Panc1 (cell line): ENCODE measurements at regions of chr18 and their contacts with region 1.

Region 1: DNA sequence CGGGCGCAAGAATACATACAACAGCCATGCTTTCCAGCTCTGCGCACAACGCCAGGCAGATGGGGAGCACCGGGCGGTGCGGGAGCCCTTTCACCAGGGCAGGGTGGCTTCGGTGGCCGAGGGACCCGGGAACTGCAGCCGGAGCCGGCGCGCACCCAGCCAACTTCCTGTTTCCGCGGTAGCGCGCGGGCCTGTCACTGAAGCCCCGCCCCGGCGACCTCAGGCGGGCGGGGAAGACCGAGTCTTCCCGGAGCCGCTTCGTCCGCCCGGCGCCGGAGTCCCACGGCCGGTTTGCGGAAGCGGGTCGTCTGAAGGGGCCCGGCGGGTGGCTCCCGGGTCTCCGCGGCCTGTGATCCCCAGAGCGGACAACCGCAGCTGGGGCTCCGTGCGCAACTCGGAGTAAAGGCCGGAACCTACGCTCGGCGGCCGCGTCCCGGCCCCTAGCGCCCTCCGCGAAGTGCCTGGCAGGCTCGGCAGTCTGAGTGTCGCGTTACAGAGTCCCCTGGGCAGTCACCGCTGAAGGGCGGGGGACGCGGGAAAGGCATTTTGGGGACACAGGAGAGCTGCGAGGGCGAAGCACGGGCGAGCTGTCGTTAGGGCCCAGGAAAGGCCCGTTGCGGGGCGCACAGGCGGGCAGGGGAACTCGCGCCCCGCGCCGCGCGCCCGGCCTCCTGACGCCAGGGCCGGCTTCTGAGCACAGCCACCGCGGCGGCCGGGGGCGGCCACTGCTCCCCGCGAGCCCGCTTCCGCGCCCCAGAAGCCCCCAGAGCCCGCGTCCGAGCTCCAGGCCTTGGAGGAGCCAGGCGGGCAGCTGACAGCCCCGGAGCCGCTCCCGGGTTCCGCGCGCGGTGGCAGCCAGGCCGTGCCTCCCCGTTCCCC is at the start of gene MPPE1:
- DNase-seq: no peak
- ATAC-seq: peak; percentile 97
- H3K4me3 ChIP-seq: peak within 1 kb of the TSS; percentile 77 to 78
- H3K27ac ChIP-seq: peak within 1 kb of the TSS; percentile 96
- H3K4me1 ChIP-seq: peaks cover 6% of the 10 kb centered on the region; the same call in 1 of the 2 replicates
- H3K27me3 ChIP-seq: no peaks in the 10 kb centered on the region
- CTCF ChIP-seq: no peak
- total RNA-seq, gene MPPE1: 37.1 TPM

Region 2: DNA sequence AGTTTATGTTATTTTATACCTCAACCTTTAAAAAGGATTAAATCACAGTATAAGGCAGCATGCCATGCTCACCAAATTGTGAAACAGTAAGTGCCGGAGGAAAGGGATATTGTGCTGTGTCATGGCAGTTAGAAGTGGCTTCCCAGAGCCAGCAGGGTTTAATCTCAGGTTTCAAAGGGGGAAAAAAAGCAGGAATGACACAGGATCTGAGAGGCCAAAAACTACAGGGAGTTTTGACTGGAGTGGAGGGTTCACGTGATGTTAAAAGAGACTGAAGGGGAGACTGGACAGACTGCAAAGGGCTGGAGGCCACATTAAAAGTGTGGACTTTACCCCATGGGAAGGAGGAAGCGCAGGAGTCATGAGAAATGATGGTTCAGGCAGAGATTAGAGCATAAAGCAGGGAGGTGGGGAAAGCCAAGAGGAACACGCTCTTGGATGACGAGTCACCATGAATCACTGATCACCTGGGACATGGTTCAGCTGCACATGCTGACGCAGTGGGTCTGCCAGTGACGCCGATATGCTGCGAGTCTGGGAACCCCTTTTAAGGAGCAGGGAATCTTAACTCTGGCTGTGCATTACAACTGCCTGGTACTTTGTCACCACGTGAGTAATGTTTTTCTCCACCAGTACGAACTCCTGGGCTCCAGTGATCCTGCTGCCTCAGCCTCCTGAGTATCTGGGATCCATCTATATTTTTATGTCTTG is 51.1 kb before region 1 on chr18:
- CTCF ChIA-PET with region 1: no interaction called
- POLR2A ChIA-PET with region 1: no interaction called
- in situ Hi-C with region 1: no loop called
- intact Hi-C with region 1: no loop called
- DNase-seq: peak; percentile 98
- ATAC-seq: peak; percentile 92
- H3K4me3 ChIP-seq: peak overlapping the region in 1 of 2 experiments; percentile 50; a peak in 3 of 4 replicates
- H3K27ac ChIP-seq: peak overlapping the region; percentile 91
- H3K4me1 ChIP-seq: peaks cover 20% of the 10 kb centered on the region
- H3K27me3 ChIP-seq: no peaks in the 10 kb centered on the region
- CTCF ChIP-seq: no peak

Region 3: GRCh38 chr18:12015416-12016062 is 107.1 kb after region 1 on chr18:
- CTCF ChIA-PET with region 1: no interaction called
- POLR2A ChIA-PET with region 1: no interaction called
- in situ Hi-C with region 1: loop called (anchors 25 kb)
- intact Hi-C with region 1: no loop called
- DNase-seq: no peak
- ATAC-seq: no peak
- H3K4me3 ChIP-seq: no peak overlapping the region
- H3K27ac ChIP-seq: no peak overlapping the region
- H3K4me1 ChIP-seq: no peaks in the 10 kb centered on the region
- H3K27me3 ChIP-seq: no peaks in the 10 kb centered on the region
- CTCF ChIP-seq: no peak